ENCODE measurements at regions of chr1 and their contacts with region 1.

Region 1: DNA sequence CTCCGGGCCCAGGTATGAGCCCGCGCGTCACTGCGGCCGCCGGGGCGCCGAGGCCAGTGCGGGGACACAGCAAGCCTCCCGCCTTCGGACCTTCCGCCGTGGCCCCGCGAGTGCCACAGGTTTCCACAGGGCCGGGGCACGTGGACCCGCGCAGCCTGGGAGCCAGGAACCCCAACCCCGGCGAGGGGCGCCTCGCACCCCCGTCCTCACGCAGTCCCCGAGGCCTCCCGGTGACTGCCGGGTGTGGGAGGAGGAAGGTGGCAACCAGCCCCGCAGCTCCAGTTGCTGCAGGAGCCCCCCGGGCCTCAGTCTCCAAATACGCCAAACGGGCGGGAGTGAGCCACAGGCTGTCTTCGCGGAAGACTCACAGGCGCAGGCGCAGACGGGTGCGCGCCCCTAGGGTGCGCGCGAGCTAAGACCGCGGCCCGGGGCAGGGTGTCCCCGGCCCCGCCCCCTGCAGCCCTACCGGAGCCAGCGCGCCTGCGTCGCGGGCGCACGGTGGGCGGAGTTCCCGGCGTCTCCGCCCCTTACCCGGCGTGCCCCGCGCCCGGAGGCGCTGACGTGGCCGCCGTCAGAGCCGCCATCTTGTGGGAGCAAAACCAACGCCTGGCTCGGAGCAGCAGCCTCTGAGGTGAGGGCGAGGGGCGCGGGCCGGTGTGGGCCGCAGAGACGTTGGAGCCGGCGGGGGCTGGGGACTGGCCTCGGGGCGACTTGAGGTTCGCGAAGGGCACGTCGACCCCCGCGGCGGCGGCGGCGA is at the start of gene ARF1:
- DNase-seq: peak; percentile 97 to 100 (median 98)
- ATAC-seq: peak; percentile 88
- H3K4me3 ChIP-seq: peak within 1 kb of the TSS; percentile 96
- H3K27ac ChIP-seq: peak within 1 kb of the TSS; percentile 98
- H3K4me1 ChIP-seq: peaks cover 34 to 55% of the 10 kb centered on the region in 2 experiments; a peak in 4 of 5 replicates
- H3K27me3 ChIP-seq: no peaks in the 10 kb centered on the region
- CTCF ChIP-seq: peak in 2 of 3 experiments; percentile 13 to 33; a peak in 2 of 6 replicates
- EP300 ChIP-seq: no peak
- POLR2A ChIP-seq: peak; percentile 86
- RAD21 ChIP-seq: 0 out of 4 replicates have a peak, but pooled peaks of 1 of the 2 experiments have one; percentile 23
- polyA plus RNA-seq, gene ARF1: 69.8 to 232 TPM

Region 2: GRCh38 chr1:228059634-228060457 is 22.5 kb before region 1 on chr1:
- CTCF ChIA-PET with region 1: no interaction called
- POLR2A ChIA-PET with region 1: interaction called, 18 read pairs
- in situ Hi-C with region 1: no loop called
- intact Hi-C with region 1: no loop called
- DNase-seq: peak; percentile 82 to 97 (median 92)
- ATAC-seq: peak; percentile 93
- H3K4me3 ChIP-seq: peak overlapping the region; percentile 45
- H3K27ac ChIP-seq: no peak overlapping the region
- H3K4me1 ChIP-seq: peaks cover 0 to 41% of the 10 kb centered on the region in 2 experiments; a peak in 3 of 5 replicates
- H3K27me3 ChIP-seq: peaks cover 0 to 16% of the 10 kb centered on the region in 2 experiments; a peak in 3 of 5 replicates
- CTCF ChIP-seq: no peak
- EP300 ChIP-seq: no peak
- POLR2A ChIP-seq: no peak
- RAD21 ChIP-seq: no peak

Region 3: DNA sequence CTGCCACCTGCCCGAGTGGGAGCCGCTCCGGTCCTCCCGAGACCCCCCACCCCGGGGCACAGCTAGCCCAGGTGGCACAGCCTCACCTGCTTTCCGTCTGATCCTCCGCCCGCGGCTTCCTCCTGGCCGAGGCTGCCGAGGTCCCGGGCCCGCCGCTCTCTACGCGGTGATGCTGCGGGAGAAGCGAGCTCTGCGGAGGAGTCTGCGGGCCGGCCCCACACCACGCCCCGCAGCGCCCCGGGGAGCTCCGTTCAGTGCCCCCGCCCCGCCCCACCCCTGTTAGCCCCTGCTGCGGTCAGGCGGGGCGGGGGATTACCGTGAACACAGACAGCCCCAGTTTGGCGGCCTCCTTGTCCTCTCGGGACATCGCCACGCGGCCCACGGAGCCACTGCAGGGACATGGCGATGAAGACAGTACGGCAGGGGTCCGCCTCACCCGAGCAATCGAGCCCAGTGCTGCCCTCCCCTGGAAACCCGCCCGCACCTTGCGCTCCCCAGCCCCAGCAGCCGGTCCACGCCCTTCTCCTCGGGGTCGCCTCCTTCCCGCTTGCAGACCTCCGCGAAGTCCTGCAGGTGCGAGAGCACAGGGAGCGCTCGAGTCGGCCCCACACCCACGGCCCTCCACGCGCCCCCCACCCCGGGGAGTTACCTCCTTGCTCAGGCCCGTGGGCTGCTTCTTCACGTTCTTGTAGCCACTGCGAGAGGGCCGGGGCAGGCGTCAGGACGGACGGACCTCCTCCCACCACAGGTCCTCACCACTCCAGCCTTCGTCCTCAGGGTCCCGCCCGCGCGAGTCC is 19.9 kb after region 1 on chr1:
- CTCF ChIA-PET with region 1: interaction called, 4 read pairs
- POLR2A ChIA-PET with region 1: interaction called, 92 read pairs
- in situ Hi-C with region 1: no loop called
- intact Hi-C with region 1: loop called (anchors 2 kb)
- DNase-seq: peak; percentile 70 to 88 (median 80)
- ATAC-seq: peak; percentile 78
- H3K4me3 ChIP-seq: peak overlapping the region; percentile 100
- H3K27ac ChIP-seq: peak overlapping the region; percentile 87
- H3K4me1 ChIP-seq: peaks cover 15 to 62% of the 10 kb centered on the region in 2 experiments
- H3K27me3 ChIP-seq: no peaks in the 10 kb centered on the region
- CTCF ChIP-seq: peak; percentile 54 to 74 (median 56)
- EP300 ChIP-seq: no peak
- POLR2A ChIP-seq: no peak
- RAD21 ChIP-seq: peak; percentile 21 to 41; a peak in 3 of 4 replicates

Region 4: GRCh38 chr1:228109073-228109961 is 27.0 kb after region 1 on chr1 and contains the start of gene MRPL55:
- CTCF ChIA-PET with region 1: no interaction called
- POLR2A ChIA-PET with region 1: interaction called, 13 read pairs
- in situ Hi-C with region 1: no loop called
- intact Hi-C with region 1: no loop called
- DNase-seq: peak; percentile 96 to 99 (median 98)
- ATAC-seq: peak; percentile 92
- H3K4me3 ChIP-seq: peak within 1 kb of the TSS; percentile 81
- H3K27ac ChIP-seq: peak within 1 kb of the TSS; percentile 77
- H3K4me1 ChIP-seq: peaks cover 16 to 41% of the 10 kb centered on the region in 2 experiments; a peak in 4 of 5 replicates
- H3K27me3 ChIP-seq: no peaks in the 10 kb centered on the region
- CTCF ChIP-seq: peak in 1 of 3 experiments; percentile 13; a peak in 2 of 6 replicates
- EP300 ChIP-seq: peak; percentile 68; the same call in 1 of the 2 replicates
- POLR2A ChIP-seq: peak; percentile 95
- RAD21 ChIP-seq: no peak
- polyA plus RNA-seq, gene MRPL55: 34.9 to 77.0 TPM

Region 5: DNA sequence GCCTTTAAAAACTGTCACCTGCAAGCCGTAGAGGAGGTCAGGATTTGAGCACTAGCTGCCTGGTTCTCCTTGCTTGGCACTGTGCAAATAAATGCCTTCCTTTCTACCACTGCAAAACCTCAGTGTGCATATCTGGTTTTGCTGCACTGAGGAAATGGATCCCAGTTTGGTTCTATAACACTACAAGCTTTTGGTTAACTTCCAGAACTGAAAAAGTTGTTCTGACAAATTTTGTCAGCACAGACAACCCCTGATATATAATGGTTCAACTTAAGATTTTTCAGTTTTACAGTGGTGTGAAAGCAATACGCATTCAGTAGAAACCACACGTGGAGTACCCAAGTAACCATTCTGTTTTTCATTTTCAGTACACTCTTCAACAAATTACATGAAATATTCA is 1954.9 kb after region 1 on chr1:
- CTCF ChIA-PET with region 1: no interaction called
- POLR2A ChIA-PET with region 1: no interaction called
- in situ Hi-C with region 1: no loop called
- intact Hi-C with region 1: no loop called
- DNase-seq: no peak
- ATAC-seq: no peak
- H3K4me3 ChIP-seq: no peak overlapping the region
- H3K27ac ChIP-seq: no peak overlapping the region
- H3K4me1 ChIP-seq: no peaks in the 10 kb centered on the region
- H3K27me3 ChIP-seq: peaks cover 9 to 14% of the 10 kb centered on the region in 2 experiments
- CTCF ChIP-seq: no peak
- EP300 ChIP-seq: no peak
- POLR2A ChIP-seq: no peak
- RAD21 ChIP-seq: no peak